Activated T-helper 1 cell treated with anti-CD3 and anti-CD28 coated beads, Interleukin-12 subunit alpha, Interleukin-12 subunit beta, Interleukin-2, Interleukin-4 antibody, amounts not matched to agents 30 ng/mL and 10 ng/mL and 1 ng/mL, durations not matched to agents 14 hours and 24 hours and 36 hours (primary cell): ENCODE measurements at regions of chr7 and their contacts with region 1.

Region 1: DNA sequence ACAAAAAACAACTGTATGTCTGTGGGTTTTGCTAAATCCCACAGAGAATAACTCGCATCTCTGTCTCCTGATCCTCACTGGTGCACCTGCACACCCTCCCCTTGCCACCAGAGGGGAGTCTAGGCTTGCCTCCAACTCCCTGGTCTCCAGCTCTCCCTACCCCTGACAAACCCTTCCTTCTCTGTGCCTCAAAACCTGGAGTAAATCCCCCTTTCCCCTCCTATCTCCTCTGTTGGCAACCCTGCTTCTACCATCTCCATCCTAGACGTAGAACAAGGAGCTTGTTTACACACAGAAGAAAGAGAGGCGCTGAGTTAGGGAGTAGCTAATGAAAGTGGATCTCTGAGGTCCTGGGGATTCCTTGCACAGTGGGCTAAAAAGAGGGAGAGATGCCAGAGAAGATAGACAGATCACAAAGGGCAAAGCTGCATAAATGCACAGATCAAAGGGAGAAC is 6.0 kb downstream of the MBLAC1 start:
- DNase-seq: peak; percentile 52
- H3K4me3 Mint-ChIP-seq: no peak overlapping the region
- H3K27ac Mint-ChIP-seq: no peak overlapping the region
- H3K4me1 Mint-ChIP-seq: peaks cover 16% of the 10 kb centered on the region
- H3K27me3 Mint-ChIP-seq: no peaks in the 10 kb centered on the region

Region 2: GRCh38 chr7:99975782-99976521 is 156.8 kb before region 1 on chr7 and contains the start of gene AZGP1:
- intact Hi-C with region 1: loop called (anchors 5 kb)
- DNase-seq: no peak
- H3K4me3 Mint-ChIP-seq: no peak within 1 kb of the TSS
- H3K27ac Mint-ChIP-seq: no peak within 1 kb of the TSS
- H3K4me1 Mint-ChIP-seq: no peaks in the 10 kb centered on the region
- H3K27me3 Mint-ChIP-seq: peaks cover 4% of the 10 kb centered on the region
- total RNA-seq, gene AZGP1: not detected in 2 replicates

Region 3: GRCh38 chr7:100158229-100159098 is 25.7 kb after region 1 on chr7 and contains the start of gene TRAPPC14:
- intact Hi-C with region 1: no loop called
- DNase-seq: peak; percentile 89
- H3K4me3 Mint-ChIP-seq: peak within 1 kb of the TSS; percentile 81
- H3K27ac Mint-ChIP-seq: peak within 1 kb of the TSS; percentile 81
- H3K4me1 Mint-ChIP-seq: peaks cover 49% of the 10 kb centered on the region
- H3K27me3 Mint-ChIP-seq: no peaks in the 10 kb centered on the region
- total RNA-seq, gene TRAPPC14: 43.9 and 44.3 TPM in 2 replicates

Region 4: DNA sequence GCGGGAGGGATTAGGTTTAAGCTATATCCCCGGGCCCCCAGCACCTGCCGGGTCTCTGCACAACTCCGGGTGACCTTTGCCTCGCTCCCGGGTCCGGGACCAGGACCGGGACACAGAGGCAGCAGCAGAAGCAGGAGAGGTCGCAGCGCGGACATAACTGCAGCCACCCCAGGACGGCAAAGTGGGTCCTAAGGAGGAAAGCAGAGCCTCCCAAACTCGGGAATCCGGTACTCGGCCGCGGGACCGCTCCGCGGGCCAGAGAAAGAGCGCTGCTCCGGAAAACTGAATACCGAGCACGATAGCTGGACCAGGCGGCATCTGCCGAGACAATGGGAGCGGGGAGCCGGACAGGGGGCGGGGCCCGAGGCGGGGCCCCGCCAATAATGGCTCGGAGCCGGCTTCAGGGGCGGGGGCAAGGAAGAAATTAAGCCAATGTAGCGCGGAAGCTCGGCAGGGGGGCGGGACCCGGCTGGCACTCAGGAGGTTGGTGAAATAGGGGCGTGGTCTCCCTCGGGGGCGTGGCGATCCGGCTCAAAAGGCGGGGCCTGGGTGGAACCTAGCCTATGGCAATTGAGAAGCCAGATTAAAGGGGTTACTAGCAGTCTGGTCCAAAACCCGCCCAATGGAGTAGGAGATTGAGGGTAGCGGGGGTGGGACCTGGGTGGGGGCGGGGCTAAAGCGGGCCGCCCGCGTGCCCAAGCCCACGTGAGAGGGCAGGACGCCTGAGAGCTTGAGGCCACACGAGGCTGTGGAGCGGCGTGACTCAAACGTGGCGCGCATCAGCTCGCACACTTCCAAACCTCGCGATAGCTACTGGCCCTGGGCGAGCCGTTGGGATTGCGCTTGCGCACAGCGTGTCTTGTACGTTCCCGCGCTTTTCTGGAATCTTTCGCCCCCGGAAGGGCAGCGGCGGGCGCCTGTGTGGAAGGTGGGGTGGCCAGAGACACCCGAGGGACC is 44.6 kb after region 1 on chr7 and contains the starts of genes GPC2 and STAG3:
- intact Hi-C with region 1: loop called (anchors 1 kb)
- DNase-seq: peak; percentile 97
- H3K4me3 Mint-ChIP-seq: peak within 1 kb of the TSS; percentile 82
- H3K27ac Mint-ChIP-seq: peak within 1 kb of the TSS; percentile 83
- H3K4me1 Mint-ChIP-seq: peaks cover 46% of the 10 kb centered on the region
- H3K27me3 Mint-ChIP-seq: peaks cover 15% of the 10 kb centered on the region
- total RNA-seq, gene GPC2: 3.9 and 4.8 TPM in 2 replicates
- total RNA-seq, gene STAG3: 25.0 and 30.6 TPM in 2 replicates

Region 5: GRCh38 chr7:100342765-100343164 is 210.0 kb after region 1 on chr7:
- intact Hi-C with region 1: loop called (anchors 2 kb)
- DNase-seq: no peak
- H3K4me3 Mint-ChIP-seq: no peak overlapping the region
- H3K27ac Mint-ChIP-seq: no peak overlapping the region
- H3K4me1 Mint-ChIP-seq: peaks cover 39% of the 10 kb centered on the region
- H3K27me3 Mint-ChIP-seq: no peaks in the 10 kb centered on the region

Region 6: GRCh38 chr7:101031082-101031481 is 898.4 kb after region 1 on chr7:
- intact Hi-C with region 1: no loop called
- DNase-seq: no peak
- H3K4me3 Mint-ChIP-seq: no peak overlapping the region
- H3K27ac Mint-ChIP-seq: no peak overlapping the region
- H3K4me1 Mint-ChIP-seq: no peaks in the 10 kb centered on the region
- H3K27me3 Mint-ChIP-seq: no peaks in the 10 kb centered on the region